Esophagus muscularis mucosa (tissue), 4 donors: ENCODE measurements at regions of chr20 and their contacts with region 1.

Region 1: DNA sequence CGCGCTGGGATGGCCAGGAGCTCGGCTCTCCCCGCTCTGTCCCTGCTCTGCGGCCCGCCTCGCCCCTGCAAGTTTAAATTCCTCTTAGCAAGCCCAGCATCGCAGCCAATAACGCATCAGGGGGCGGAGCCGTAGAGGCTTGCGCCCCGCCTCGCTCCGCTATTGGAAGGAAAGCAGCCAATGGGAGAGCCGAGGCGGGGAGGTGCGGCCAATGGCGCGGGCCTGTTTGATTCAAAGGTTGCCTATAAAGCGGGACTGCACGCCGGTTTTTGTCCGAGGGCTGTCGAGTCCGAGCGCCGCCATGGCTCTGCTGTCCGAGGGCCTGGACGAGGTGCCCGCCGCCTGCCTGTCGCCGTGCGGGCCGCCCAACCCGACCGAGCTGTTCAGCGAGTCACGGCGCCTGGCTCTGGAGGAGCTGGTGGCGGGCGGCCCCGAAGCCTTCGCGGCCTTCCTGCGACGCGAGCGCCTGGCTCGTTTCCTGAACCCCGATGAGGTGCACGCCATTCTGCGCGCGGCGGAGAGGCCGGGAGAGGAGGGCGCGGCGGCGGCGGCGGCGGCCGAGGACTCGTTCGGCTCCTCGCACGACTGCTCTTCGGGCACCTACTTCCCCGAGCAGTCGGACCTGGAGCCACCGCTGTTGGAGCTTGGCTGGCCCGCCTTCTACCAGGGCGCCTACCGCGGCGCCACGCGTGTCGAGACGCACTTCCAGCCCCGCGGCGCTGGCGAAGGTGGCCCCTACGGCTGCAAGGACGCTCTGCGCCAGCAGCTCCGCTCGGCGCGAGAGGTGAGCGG is at the start of gene FAM83D:
- DNase-seq: peak; percentile 98
- H3K4me3 ChIP-seq: peak within 1 kb of the TSS; percentile 67 to 92 (median 78)
- H3K27ac ChIP-seq: peak within 1 kb of the TSS; percentile 77 to 91 (median 85)
- H3K4me1 ChIP-seq: peaks cover 16 to 38% (median 21%) of the 10 kb centered on the region in 4 donors
- H3K27me3 ChIP-seq: peaks cover 0 to under 1% (median 0%) of the 10 kb centered on the region in 4 donors
- CTCF ChIP-seq: peak in 1 of 3 experiments; percentile 13
- EP300 ChIP-seq: no peak
- POLR2A ChIP-seq: peak; percentile 89
- total RNA-seq, gene FAM83D: 93.9 to 311 (median 211) TPM

Region 2: DNA sequence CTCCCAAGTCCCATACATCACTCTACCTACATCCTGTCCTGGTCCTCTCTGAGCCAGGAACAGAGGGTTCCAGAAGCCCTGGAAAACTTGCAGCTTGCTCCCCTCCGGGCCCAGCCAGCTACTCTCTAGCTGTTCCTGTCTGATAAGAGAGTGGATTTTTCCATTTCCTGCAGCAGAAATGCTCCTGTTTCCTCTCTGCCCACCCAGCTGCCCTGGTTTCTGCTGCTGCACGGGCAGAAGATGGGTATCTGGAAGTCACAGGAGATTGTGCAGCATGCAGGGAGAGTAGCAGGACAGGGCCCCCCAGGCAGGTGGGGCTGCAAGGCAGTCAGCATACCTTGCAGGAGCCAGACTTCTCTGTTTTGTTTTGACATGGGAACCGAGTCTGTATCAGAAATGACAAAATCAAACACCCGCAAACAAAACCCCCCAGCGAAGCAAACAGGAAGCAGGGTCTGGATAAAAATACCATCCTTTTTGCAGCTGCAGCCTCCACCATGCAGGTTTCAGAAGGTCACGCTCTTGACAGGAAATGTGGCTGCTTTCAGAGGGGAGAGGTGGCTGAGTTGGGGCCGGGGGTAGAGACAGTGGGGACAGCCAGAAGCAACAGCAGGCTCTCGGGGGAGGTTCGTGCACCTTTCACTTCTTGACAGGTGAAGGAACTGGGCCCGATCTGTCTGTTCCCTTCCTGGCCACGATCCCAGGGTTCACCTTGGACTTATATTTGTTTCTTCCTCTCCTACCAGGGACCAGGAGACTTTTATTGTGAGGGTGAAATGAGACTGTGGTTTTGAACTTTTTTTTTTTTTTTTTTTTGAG is 51.0 kb before region 1 on chr20:
- intact Hi-C with region 1: no loop called
- DNase-seq: no peak
- H3K4me3 ChIP-seq: no peak overlapping the region
- H3K27ac ChIP-seq: peak overlapping the region in 1 of 4 donors; percentile 32
- H3K4me1 ChIP-seq: peaks cover 5 to 29% (median 16%) of the 10 kb centered on the region in 4 donors
- H3K27me3 ChIP-seq: peaks cover 0 to 80% (median 0%) of the 10 kb centered on the region in 4 donors
- CTCF ChIP-seq: no peak
- EP300 ChIP-seq: no peak
- POLR2A ChIP-seq: no peak

Region 3: DNA sequence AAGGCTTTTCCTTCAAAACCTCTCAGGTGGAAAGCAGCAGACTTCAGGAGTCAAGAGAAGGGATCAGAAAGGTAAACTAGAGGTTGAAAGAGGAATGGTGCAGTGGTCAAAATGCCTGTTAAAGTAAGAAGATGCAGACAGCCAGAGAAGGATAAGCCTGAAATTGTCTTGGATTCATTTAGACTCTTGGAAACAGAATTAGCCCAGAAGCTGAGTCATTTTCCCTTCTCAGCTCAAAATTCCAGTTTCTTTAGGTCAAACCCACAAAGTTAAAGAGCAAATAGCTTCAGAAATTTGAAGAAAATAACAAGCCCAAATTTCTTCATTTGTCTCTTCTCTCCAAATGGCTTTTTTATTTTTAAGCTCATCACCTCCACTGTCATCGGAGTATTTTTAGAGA is 109.7 kb after region 1 on chr20:
- intact Hi-C with region 1: loop called (anchors 2 kb)
- DNase-seq: no peak
- H3K4me3 ChIP-seq: no peak overlapping the region
- H3K27ac ChIP-seq: peak overlapping the region; percentile 85 to 90 (median 88)
- H3K4me1 ChIP-seq: peaks cover 0 to 35% (median 14%) of the 10 kb centered on the region in 4 donors
- H3K27me3 ChIP-seq: no peaks in the 10 kb centered on the region
- CTCF ChIP-seq: no peak
- EP300 ChIP-seq: no peak
- POLR2A ChIP-seq: no peak

Region 4: GRCh38 chr20:39049684-39050554 is 123.6 kb after region 1 on chr20:
- intact Hi-C with region 1: loop called (anchors 2 kb)
- DNase-seq: no peak
- H3K4me3 ChIP-seq: peak overlapping the region; percentile 65 to 75 (median 72)
- H3K27ac ChIP-seq: peak overlapping the region; percentile 61 to 85 (median 74)
- H3K4me1 ChIP-seq: peaks cover 8 to 35% (median 31%) of the 10 kb centered on the region in 4 donors
- H3K27me3 ChIP-seq: peaks cover 0 to 16% (median 0%) of the 10 kb centered on the region in 4 donors
- CTCF ChIP-seq: peak; percentile 96 to 100 (median 97)
- EP300 ChIP-seq: no peak
- POLR2A ChIP-seq: no peak

Region 5: GRCh38 chr20:39081255-39081654 is 154.9 kb after region 1 on chr20:
- intact Hi-C with region 1: loop called (anchors 10 kb)
- DNase-seq: peak; percentile 95
- H3K4me3 ChIP-seq: no peak overlapping the region
- H3K27ac ChIP-seq: no peak overlapping the region
- H3K4me1 ChIP-seq: no peaks in the 10 kb centered on the region
- H3K27me3 ChIP-seq: peaks cover 0 to 53% (median 4%) of the 10 kb centered on the region in 4 donors
- CTCF ChIP-seq: peak; percentile 85 to 97 (median 91)
- EP300 ChIP-seq: no peak
- POLR2A ChIP-seq: no peak